K562 (cell line): ENCODE measurements at regions of chr10 and their contacts with region 1.

Region 1: GRCh38 chr10:64830869-64831268 is 1309.7 kb downstream of the REEP3 start:
- DNase-seq: no peak
- ATAC-seq: no peak
- H3K4me3 ChIP-seq: no peak overlapping the region
- H3K27ac ChIP-seq: no peak overlapping the region
- H3K4me1 ChIP-seq: no peaks in the 10 kb centered on the region
- H3K27me3 ChIP-seq: no peaks in the 10 kb centered on the region
- CTCF ChIP-seq: no peak
- EP300 ChIP-seq: no peak
- POLR2A ChIP-seq: no peak
- RAD21 ChIP-seq: no peak

Region 2: GRCh38 chr10:64586934-64587503 is 243.8 kb before region 1 on chr10:
- CTCF ChIA-PET with region 1: no interaction called
- POLR2A ChIA-PET with region 1: no interaction called
- in situ Hi-C with region 1: no loop called
- intact Hi-C with region 1: no loop called
- DNase-seq: peak in 1 of 4 experiments; percentile 8
- ATAC-seq: no peak
- H3K4me3 ChIP-seq: no peak overlapping the region
- H3K27ac ChIP-seq: no peak overlapping the region
- H3K4me1 ChIP-seq: no peaks in the 10 kb centered on the region
- H3K27me3 ChIP-seq: no peaks in the 10 kb centered on the region
- CTCF ChIP-seq: no peak
- EP300 ChIP-seq: no peak
- POLR2A ChIP-seq: no peak
- RAD21 ChIP-seq: no peak

Region 3: DNA sequence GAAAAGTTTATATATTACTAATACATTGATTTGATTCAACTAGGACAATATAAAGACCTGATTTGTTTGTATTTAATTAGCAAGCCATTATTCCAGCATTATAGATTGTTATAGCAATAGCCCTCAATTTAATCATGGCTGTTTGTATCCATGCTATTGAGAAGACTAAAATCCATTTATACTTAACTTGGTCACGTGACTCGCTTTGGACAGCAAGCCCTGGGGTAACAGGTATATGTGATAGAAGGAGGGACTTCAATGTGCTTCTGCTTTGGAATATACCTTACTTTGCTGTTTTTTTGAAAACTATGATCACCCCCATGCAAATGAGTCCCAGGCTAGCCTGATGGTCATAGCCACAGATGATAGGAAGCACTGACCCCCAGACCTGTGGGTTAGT is 13.8 kb before region 1 on chr10:
- CTCF ChIA-PET with region 1: no interaction called
- POLR2A ChIA-PET with region 1: no interaction called
- in situ Hi-C with region 1: no loop called
- intact Hi-C with region 1: loop called (anchors 1 kb)
- DNase-seq: no peak
- ATAC-seq: no peak
- H3K4me3 ChIP-seq: no peak overlapping the region
- H3K27ac ChIP-seq: no peak overlapping the region
- H3K4me1 ChIP-seq: no peaks in the 10 kb centered on the region
- H3K27me3 ChIP-seq: no peaks in the 10 kb centered on the region
- CTCF ChIP-seq: no peak
- EP300 ChIP-seq: no peak
- POLR2A ChIP-seq: no peak
- RAD21 ChIP-seq: no peak

Region 4: GRCh38 chr10:64846700-64847099 is 15.8 kb after region 1 on chr10:
- CTCF ChIA-PET with region 1: no interaction called
- POLR2A ChIA-PET with region 1: no interaction called
- in situ Hi-C with region 1: no loop called
- intact Hi-C with region 1: no loop called
- DNase-seq: no peak
- ATAC-seq: no peak
- H3K4me3 ChIP-seq: no peak overlapping the region
- H3K27ac ChIP-seq: no peak overlapping the region
- H3K4me1 ChIP-seq: no peaks in the 10 kb centered on the region
- H3K27me3 ChIP-seq: no peaks in the 10 kb centered on the region
- CTCF ChIP-seq: no peak
- EP300 ChIP-seq: no peak
- POLR2A ChIP-seq: no peak
- RAD21 ChIP-seq: no peak